OCI-LY7 (cell line): ENCODE measurements at regions of chr12 and their contacts with region 1.

Region 1: DNA sequence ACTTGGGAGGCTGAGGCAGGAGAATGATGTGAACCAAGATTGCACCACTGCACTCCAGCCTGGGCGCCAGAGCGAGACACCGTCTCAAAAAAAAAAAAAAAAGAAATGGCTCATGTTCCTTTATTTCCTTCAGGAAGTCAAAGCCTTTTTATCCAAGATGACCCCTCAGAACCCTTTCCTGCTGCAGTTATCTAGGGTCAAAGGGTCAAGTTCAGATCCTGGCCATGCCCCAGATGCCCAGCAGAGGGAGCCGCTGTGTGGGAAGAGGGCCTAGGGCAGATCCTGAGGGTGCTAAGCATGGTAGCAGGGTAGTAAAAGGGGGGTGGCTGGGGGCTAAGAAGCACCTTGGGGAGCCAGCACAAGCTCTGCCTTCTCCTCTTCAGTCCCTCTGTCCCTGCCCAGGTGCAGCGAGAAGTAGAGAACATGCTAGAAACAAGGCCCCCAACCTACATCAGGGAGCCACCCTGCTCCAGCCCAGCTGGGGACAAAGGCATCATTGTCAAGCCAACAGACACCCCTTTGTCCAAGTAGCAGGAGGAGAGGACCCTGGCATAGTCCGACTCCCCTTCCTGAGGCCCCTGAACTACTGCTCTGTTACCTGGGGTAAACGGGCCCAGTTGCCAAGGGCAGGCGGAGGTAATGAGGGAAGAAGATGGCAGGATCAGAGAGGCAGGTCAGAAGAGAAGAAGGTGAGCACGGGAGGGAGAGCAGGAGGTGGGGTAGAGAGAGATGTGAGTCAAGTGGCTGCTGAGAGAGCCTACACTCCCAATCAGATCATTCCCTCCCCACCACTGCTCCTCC is 6.5 kb downstream of the NFE2 start:
- DNase-seq: peak; percentile 58
- H3K4me3 ChIP-seq: no peak overlapping the region
- H3K27ac ChIP-seq: no peak overlapping the region
- H3K4me1 ChIP-seq: no peaks in the 10 kb centered on the region
- CTCF ChIP-seq: peak; percentile 85

Region 2: DNA sequence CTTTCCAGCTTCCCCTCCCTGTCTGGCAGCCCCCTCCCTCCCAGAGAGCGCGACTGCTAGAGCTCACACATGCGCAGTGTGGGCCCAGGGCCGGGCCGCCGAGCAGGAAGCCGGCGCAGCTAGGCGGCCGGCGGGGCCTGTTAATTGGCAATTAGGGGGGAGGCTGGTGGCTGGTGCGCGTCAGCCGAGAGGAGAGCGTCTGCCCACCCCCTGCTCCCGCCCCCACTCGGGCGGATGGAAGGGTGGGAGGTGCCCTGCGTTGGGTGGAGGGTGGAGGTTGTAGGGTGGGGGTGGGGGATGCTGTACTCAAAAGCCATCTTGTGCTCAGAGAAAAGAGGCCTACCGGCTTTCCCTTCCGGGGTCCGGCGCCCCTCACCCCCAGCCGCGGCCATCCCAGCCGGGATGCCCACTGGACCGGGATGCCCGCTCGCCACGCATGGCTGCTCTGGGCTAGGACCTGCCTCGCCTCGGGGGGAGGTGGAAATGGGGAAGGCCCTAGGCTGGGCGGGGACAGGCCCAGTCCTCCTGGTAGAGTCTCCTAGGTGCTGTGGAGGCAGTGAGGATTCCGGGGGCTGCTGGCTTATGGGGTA is 276.4 kb before region 1 on chr12:
- CTCF ChIA-PET with region 1: no interaction called
- POLR2A ChIA-PET with region 1: no interaction called
- intact Hi-C with region 1: no loop called
- DNase-seq: peak; percentile 98
- H3K4me3 ChIP-seq: peak overlapping the region; percentile 77
- H3K27ac ChIP-seq: peak overlapping the region; percentile 83
- H3K4me1 ChIP-seq: peaks cover 49% of the 10 kb centered on the region
- CTCF ChIP-seq: no peak

Region 3: DNA sequence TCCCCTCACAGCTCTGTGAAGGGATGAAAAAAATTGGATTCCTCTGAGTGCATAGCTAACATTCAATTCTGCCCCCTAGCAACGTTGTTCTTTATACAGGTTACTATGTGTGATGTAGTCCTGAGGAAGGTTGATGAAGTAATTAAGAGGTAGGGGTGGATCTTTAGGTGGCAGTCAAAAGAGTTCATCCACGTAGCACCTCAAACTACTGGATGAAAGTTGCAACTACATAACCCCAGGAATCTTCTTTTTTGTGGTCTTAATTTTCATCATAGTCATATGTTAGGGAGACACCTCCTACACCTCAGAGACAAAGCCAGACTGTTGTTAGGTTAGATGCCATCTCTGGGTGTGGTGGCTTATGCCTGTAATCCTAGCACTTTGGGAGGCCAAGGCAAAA is 16.7 kb after region 1 on chr12:
- CTCF ChIA-PET with region 1: no interaction called
- POLR2A ChIA-PET with region 1: no interaction called
- intact Hi-C with region 1: no loop called
- DNase-seq: no peak
- H3K4me3 ChIP-seq: no peak overlapping the region
- H3K27ac ChIP-seq: no peak overlapping the region
- H3K4me1 ChIP-seq: no peaks in the 10 kb centered on the region
- CTCF ChIP-seq: no peak

Region 4: DNA sequence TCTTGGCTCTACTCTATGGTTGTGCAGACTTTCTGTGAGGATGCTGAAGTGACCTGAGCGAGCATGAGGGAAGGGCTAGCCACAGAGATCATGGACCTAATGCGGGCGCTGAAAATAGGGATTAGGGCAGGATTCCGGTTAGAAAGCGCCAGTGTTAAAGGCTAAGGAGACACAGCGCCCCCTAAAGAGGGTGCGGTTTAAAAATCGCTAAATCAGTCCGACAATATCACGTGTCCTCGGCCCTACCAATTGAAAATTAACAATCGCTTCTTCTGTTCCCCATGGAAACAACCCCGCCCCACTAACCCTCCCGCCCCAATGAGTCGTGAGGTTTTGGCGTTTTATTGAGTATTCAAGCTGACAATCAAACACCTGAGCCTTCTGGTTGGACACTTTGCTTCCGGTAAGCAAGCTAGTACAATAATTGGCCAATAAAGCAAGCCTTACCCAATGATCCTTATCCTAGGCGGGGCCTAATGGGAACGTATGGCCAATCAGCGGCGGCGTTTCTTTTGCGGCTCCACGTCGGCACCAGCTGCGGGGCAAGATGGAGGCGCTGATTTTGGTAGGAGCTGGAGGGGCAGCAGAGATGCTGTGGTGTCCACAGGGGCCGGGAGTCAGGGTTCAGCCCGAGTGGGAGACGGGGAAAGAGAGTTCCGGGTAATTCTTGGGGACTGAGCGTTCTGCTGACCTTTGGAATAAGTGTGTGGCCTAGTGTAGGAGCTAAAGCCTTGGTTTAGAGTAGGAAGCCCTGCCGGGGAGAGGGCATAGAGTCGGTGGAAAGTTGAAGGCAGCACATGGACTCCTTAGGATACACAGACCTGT is 30.5 kb after region 1 on chr12 and contains the start of gene COPZ1:
- CTCF ChIA-PET with region 1: interaction called, 6 read pairs
- POLR2A ChIA-PET with region 1: no interaction called
- intact Hi-C with region 1: loop called (anchors 2 kb)
- DNase-seq: peak; percentile 99
- H3K4me3 ChIP-seq: peak within 1 kb of the TSS; percentile 72
- H3K27ac ChIP-seq: peak within 1 kb of the TSS; percentile 1
- H3K4me1 ChIP-seq: peaks cover 5% of the 10 kb centered on the region
- CTCF ChIP-seq: peak; percentile 94
- total RNA-seq, gene COPZ1: 77.5 and 86.0 TPM in 2 replicates

Region 5: DNA sequence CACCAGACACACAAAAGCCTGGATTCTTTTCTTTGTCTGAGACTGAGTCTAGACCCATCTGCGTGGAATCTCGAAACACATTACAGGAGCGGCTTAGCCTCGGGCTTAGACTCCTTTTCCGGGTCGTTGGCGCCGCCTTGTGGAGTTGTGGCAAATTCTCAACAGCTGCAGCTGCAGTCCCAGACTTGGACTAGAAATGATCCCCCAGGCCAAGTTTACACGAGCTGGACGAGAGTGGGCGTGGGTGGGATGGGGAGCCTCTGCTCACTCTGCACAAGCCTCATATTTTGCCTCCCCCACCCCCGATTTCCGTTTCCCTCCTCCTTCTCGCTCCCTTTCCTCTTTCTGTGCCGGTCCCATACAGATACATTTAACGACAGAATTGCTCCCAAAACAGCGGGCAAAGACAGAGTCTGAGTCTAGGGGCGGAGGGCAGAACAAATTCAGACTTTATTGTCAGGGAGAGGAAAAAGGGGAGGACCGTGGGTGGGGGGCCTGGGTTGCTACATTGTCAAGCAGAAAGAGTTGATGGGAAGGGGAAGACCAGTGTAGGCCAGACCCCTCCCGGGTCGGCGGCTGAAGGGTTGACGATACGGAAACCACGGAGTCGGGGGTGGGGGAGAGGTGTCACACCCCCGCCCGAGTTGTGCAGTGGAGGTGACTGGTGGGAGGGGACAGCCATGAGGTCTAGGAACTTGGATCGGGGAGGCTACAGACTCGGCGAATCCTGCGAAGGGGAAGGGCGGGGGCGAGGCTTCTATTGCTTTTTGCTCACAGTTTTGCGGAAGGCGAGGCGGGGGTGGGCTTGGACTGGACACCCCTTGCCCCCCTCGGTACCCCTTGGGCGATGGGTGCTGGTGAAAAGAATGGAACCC is 74.6 kb after region 1 on chr12:
- CTCF ChIA-PET with region 1: no interaction called
- POLR2A ChIA-PET with region 1: interaction called, 4 read pairs
- intact Hi-C with region 1: loop called (anchors 2 kb)
- DNase-seq: peak; percentile 90
- H3K4me3 ChIP-seq: peak overlapping the region; percentile 27
- H3K27ac ChIP-seq: no peak overlapping the region
- H3K4me1 ChIP-seq: peaks cover 24% of the 10 kb centered on the region
- CTCF ChIP-seq: peak; percentile 96